Activated CD4-positive, alpha-beta memory T cell treated with anti-CD3 and anti-CD28 coated beads, Interleukin-2, amount 10 ng/mL, durations not matched to agents 7 days and 5 days (primary cell): ENCODE measurements at regions of chr14 and their contacts with region 1.

Region 1: DNA sequence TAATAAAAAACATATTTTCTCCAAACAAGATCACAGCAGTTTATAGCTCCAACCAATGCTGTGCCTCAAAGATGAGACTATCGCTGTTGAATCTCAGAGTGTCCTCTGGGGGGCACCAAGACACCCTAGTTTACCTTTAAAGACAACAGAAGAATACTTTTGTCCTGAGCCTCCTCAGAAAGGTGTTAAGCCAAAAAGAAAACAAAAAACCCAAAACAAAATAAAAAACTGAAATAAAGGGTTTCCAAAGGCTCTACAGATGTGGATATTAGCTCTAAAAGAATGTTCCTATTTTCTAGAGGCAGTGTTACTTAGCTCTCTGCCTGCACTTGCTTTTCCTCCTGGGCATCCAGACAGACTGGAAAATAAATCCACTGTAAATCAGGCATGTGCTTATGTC is 86.9 kb upstream of the TTC7B start:
- DNase-seq: peak; percentile 66
- H3K4me3 Mint-ChIP-seq: no peak overlapping the region
- H3K27ac Mint-ChIP-seq: peak overlapping the region; percentile 21
- H3K4me1 Mint-ChIP-seq: peaks cover 30% of the 10 kb centered on the region
- H3K27me3 Mint-ChIP-seq: no peaks in the 10 kb centered on the region

Region 2: GRCh38 chr14:90778571-90779240 is 124.4 kb before region 1 on chr14:
- CTCF ChIA-PET with region 1: no interaction called
- POLR2A ChIA-PET with region 1: no interaction called
- DNase-seq: no peak
- H3K4me3 Mint-ChIP-seq: no peak overlapping the region
- H3K27ac Mint-ChIP-seq: no peak overlapping the region
- H3K4me1 Mint-ChIP-seq: no peaks in the 10 kb centered on the region
- H3K27me3 Mint-ChIP-seq: no peaks in the 10 kb centered on the region

Region 3: GRCh38 chr14:91021991-91022621 is 119.0 kb after region 1 on chr14:
- CTCF ChIA-PET with region 1: no interaction called
- POLR2A ChIA-PET with region 1: no interaction called
- DNase-seq: no peak
- H3K4me3 Mint-ChIP-seq: peak overlapping the region; percentile 70
- H3K27ac Mint-ChIP-seq: peak overlapping the region; percentile 91
- H3K4me1 Mint-ChIP-seq: peaks cover 56% of the 10 kb centered on the region
- H3K27me3 Mint-ChIP-seq: no peaks in the 10 kb centered on the region

Region 4: DNA sequence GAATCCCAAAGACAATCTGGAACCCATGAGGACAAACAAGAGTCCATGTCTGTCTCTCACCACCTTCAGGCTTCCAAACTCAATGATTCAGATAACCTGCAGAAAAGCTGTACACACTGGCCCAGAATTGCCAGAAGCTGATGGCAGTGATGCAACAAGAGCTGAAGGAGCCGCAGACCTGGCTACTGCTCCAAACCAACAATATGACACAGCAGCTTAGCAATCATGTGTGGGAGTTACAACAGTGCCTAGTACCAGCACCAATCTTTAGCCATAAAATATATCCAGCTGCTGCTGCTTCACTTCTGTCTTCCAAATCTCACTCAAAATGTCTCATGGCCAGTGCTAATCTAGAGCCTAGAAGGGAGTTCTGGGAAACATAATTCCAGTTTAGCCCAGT is 135.3 kb after region 1 on chr14:
- CTCF ChIA-PET with region 1: interaction called, 14 read pairs
- POLR2A ChIA-PET with region 1: no interaction called
- DNase-seq: no peak
- H3K4me3 Mint-ChIP-seq: no peak overlapping the region
- H3K27ac Mint-ChIP-seq: no peak overlapping the region
- H3K4me1 Mint-ChIP-seq: peaks cover 70% of the 10 kb centered on the region
- H3K27me3 Mint-ChIP-seq: no peaks in the 10 kb centered on the region

Region 5: GRCh38 chr14:91138511-91139359 is 235.6 kb after region 1 on chr14:
- CTCF ChIA-PET with region 1: interaction called, 17 read pairs
- POLR2A ChIA-PET with region 1: interaction called, 4 read pairs
- DNase-seq: peak; percentile 59
- H3K4me3 Mint-ChIP-seq: no peak overlapping the region
- H3K27ac Mint-ChIP-seq: peak overlapping the region; percentile 41
- H3K4me1 Mint-ChIP-seq: peaks cover 59% of the 10 kb centered on the region
- H3K27me3 Mint-ChIP-seq: no peaks in the 10 kb centered on the region

Region 6: DNA sequence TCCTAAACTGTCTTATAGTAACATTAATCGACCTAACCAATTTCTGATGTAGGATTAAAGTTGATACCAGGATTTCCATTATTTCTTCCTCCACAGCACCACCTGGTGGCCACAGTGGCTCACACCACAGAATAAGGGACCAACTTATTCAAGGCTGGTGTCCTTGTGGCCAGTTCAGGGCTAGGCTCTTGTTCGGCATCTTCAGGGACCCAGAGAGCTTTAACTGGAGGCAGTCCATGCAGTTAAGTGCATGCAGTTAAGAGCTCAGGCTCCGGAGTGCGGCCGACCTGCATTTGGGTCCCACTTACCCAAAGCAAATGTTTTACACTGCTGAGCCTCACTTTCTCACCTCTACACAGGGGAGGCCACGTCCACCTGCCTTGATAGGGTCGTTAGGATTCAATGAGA is 383.4 kb after region 1 on chr14:
- CTCF ChIA-PET with region 1: interaction called, 10 read pairs
- POLR2A ChIA-PET with region 1: no interaction called
- DNase-seq: peak; percentile 85
- H3K4me3 Mint-ChIP-seq: no peak overlapping the region
- H3K27ac Mint-ChIP-seq: peak overlapping the region; percentile 59
- H3K4me1 Mint-ChIP-seq: peaks cover 17% of the 10 kb centered on the region
- H3K27me3 Mint-ChIP-seq: no peaks in the 10 kb centered on the region